Activated B cell treated with CpG ODN at 0.5 μM for 24 hours (primary cell): ENCODE measurements at regions of chr4 and their contacts with region 1.

Region 1: DNA sequence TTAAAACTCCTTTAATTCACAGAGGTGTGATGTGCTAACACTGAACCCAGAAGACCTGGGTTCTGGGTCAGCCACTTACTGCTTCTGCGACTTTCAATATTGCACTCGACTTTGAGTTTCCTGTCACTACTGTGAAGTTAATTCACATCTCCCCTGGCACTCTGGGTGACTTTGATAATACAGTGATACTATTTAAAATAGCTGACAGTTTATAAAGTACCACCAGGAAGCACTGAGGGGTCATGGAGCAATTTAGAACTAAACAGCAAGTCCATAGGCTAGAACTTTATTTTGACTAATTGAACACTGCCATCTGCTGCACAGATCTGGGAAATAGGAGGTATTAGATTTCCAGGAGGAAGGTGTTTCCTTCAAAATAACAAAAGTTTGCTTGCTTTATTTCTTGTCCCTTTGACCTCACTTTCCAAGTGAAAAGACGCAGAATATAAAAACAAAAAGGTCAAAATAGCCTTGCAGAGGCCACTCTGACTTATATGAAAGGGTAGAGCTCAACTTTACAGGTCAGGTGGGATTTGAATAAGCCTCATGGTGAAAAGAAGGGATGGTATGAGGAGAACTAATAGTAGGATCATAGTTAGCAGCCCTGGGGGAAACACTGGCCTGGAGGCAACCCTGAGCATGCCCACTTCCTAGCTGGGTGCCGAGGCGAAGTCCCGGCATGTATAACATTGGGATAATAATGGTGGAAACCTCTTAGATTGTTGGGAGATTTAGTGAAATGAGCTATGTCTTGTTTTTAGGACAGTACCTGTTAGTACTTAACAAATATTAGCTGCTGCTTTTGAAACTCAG is 53.4 kb downstream of the ZNF518B start:
- DNase-seq: no peak
- ATAC-seq: no peak
- H3K4me3 Mint-ChIP-seq: no peak overlapping the region
- H3K27ac Mint-ChIP-seq: no peak overlapping the region
- H3K4me1 Mint-ChIP-seq: no peaks in the 10 kb centered on the region
- H3K27me3 Mint-ChIP-seq: peaks cover 5% of the 10 kb centered on the region
- CTCF ChIP-seq: no peak

Region 2: GRCh38 chr4:10157478-10158332 is 246.1 kb before region 1 on chr4:
- CTCF ChIA-PET with region 1: interaction called, 3 read pairs
- POLR2A ChIA-PET with region 1: no interaction called
- intact Hi-C with region 1: loop called (anchors 2 kb)
- DNase-seq: no peak
- ATAC-seq: peak; percentile 79
- H3K4me3 Mint-ChIP-seq: no peak overlapping the region
- H3K27ac Mint-ChIP-seq: no peak overlapping the region
- H3K4me1 Mint-ChIP-seq: peaks cover 2% of the 10 kb centered on the region
- H3K27me3 Mint-ChIP-seq: peaks cover 24% of the 10 kb centered on the region
- CTCF ChIP-seq: no peak

Region 3: GRCh38 chr4:10384974-10385373 is 18.9 kb before region 1 on chr4:
- CTCF ChIA-PET with region 1: interaction called, 5 read pairs
- POLR2A ChIA-PET with region 1: no interaction called
- intact Hi-C with region 1: loop called (anchors 1 kb)
- DNase-seq: no peak
- ATAC-seq: no peak
- H3K4me3 Mint-ChIP-seq: no peak overlapping the region
- H3K27ac Mint-ChIP-seq: no peak overlapping the region
- H3K4me1 Mint-ChIP-seq: no peaks in the 10 kb centered on the region
- H3K27me3 Mint-ChIP-seq: peaks cover 3% of the 10 kb centered on the region
- CTCF ChIP-seq: no peak